ENCODE measurements at regions of chr7 and their contacts with region 1.

Region 1: GRCh38 chr7:33895025-33895804 is 10.1 kb upstream of the BMPER start:
- DNase-seq: peak; percentile 26 to 73 (median 55)
- ATAC-seq: peak; percentile 63
- H3K4me3 ChIP-seq: no peak overlapping the region
- H3K4me3 Mint-ChIP-seq: no peak overlapping the region
- H3K27ac ChIP-seq: no peak overlapping the region
- H3K27ac Mint-ChIP-seq: no peak overlapping the region
- H3K4me1 ChIP-seq: peaks cover 2% of the 10 kb centered on the region
- H3K4me1 Mint-ChIP-seq: no peaks in the 10 kb centered on the region
- H3K27me3 ChIP-seq: peaks cover 9 to 16% of the 10 kb centered on the region in 2 experiments
- H3K27me3 Mint-ChIP-seq: peaks cover 57% of the 10 kb centered on the region
- CTCF ChIP-seq: peak; percentile 80

Region 2: DNA sequence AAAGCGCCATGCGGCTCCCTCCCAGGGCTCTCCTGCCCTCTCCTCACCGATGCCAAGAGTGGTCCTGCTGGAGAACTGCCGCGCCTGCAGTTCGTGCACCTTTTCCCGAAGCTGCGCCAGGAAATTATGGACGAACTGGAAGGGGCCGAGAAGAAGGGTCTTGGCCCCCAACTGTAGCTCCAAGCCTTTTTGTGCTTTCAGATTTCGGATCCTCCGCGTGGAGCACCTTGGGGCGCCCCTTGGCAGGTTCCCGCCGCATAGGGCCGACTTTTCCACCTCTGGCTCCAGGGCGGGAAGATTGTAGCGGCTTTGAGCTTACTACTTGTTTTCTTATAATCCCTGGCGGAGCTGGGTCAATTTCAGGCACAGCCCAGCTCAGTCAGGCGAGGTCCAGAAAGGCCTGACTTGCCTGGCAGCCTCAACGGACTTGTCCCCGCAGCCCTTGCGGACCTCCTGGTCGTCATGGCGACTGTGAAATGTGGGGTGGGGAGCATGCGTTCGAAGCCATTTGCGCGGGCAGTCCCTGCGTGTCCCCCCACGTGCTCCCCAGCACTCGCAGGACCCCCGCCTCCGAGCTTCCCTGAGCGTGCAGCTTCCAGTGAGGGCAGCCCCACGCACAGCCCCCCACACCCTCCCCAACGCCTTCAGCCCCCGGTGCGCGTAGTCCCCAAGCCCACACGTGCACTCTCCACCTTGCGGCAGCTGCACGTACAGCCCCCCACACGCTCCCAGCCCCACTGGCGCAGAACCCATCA is 1133.6 kb before region 1 on chr7:
- CTCF ChIA-PET with region 1: no interaction called
- POLR2A ChIA-PET with region 1: no interaction called
- intact Hi-C with region 1: loop called in 1 of 2 experiments (anchors 10 kb)
- DNase-seq: peak in 1 of 14 experiments; percentile 8
- ATAC-seq: no peak
- H3K4me3 ChIP-seq: no peak overlapping the region
- H3K4me3 Mint-ChIP-seq: no peak overlapping the region
- H3K27ac ChIP-seq: no peak overlapping the region
- H3K27ac Mint-ChIP-seq: no peak overlapping the region
- H3K4me1 ChIP-seq: peaks cover 3% of the 10 kb centered on the region
- H3K4me1 Mint-ChIP-seq: peaks cover 11% of the 10 kb centered on the region
- H3K27me3 ChIP-seq: peaks cover 25 to 42% of the 10 kb centered on the region in 2 experiments
- H3K27me3 Mint-ChIP-seq: peaks cover 73% of the 10 kb centered on the region
- CTCF ChIP-seq: no peak

Region 3: DNA sequence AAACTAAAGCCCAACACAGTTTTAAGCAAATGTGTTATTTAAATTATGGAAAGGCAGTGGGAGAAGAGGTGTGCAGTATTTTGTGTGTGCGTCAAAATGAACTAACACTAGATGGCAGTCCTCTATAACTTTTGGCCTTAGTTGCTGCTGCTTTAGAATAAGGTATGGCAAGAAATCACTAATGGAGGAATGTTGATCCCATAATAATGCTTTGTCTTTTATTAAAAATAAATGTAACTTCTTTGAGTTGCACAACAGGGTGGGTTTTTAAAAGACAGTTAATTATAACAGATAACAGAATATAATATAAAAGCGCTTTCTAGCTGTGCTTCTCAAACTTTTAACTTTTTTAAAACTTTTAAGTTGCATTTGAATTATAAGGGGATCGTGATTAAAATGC is 709.4 kb before region 1 on chr7:
- CTCF ChIA-PET with region 1: no interaction called
- POLR2A ChIA-PET with region 1: no interaction called
- intact Hi-C with region 1: loop called in 1 of 2 experiments (anchors 10 kb)
- DNase-seq: peak in 4 of 14 experiments; percentile 6 to 60 (median 55)
- ATAC-seq: no peak
- H3K4me3 ChIP-seq: no peak overlapping the region
- H3K4me3 Mint-ChIP-seq: no peak overlapping the region
- H3K27ac ChIP-seq: no peak overlapping the region
- H3K27ac Mint-ChIP-seq: no peak overlapping the region
- H3K4me1 ChIP-seq: peaks cover 4% of the 10 kb centered on the region
- H3K4me1 Mint-ChIP-seq: peaks cover 9% of the 10 kb centered on the region
- H3K27me3 ChIP-seq: no peaks in the 10 kb centered on the region
- H3K27me3 Mint-ChIP-seq: no peaks in the 10 kb centered on the region
- CTCF ChIP-seq: peak; percentile 53